SK-N-SH (cell line): ENCODE measurements at regions of chr12 and their contacts with region 1.

Region 1: GRCh38 chr12:78146365-78146772 is 315.7 kb downstream of the NAV3 start:
- DNase-seq: peak; percentile 5
- H3K4me3 ChIP-seq: no peak overlapping the region
- H3K27ac ChIP-seq: no peak overlapping the region
- H3K4me1 ChIP-seq: peaks cover 8 to 12% of the 10 kb centered on the region in 2 experiments
- H3K27me3 ChIP-seq: no peaks in the 10 kb centered on the region
- CTCF ChIP-seq: peak; percentile 90
- EP300 ChIP-seq: no peak
- RAD21 ChIP-seq: peak; percentile 71

Region 2: GRCh38 chr12:78120866-78121560 is 25.4 kb before region 1 on chr12:
- CTCF ChIA-PET with region 1: interaction called, 11 read pairs
- POLR2A ChIA-PET with region 1: no interaction called
- DNase-seq: peak; percentile 35
- H3K4me3 ChIP-seq: no peak overlapping the region
- H3K27ac ChIP-seq: no peak overlapping the region; a peak in 1 of 4 replicates
- H3K4me1 ChIP-seq: peaks cover 0 to 3% of the 10 kb centered on the region in 2 experiments; a peak in 3 of 4 replicates
- H3K27me3 ChIP-seq: no peaks in the 10 kb centered on the region
- CTCF ChIP-seq: peak; percentile 63
- EP300 ChIP-seq: no peak
- RAD21 ChIP-seq: peak; percentile 84

Region 3: GRCh38 chr12:78157199-78157598 is 10.8 kb after region 1 on chr12:
- CTCF ChIA-PET with region 1: interaction called, 24 read pairs
- POLR2A ChIA-PET with region 1: no interaction called
- DNase-seq: no peak
- H3K4me3 ChIP-seq: no peak overlapping the region
- H3K27ac ChIP-seq: no peak overlapping the region
- H3K4me1 ChIP-seq: peaks cover 0 to 5% of the 10 kb centered on the region in 2 experiments; a peak in 1 of 4 replicates
- H3K27me3 ChIP-seq: no peaks in the 10 kb centered on the region
- CTCF ChIP-seq: no peak
- EP300 ChIP-seq: no peak
- RAD21 ChIP-seq: no peak